CD4-positive, alpha-beta T cell (primary cell): ENCODE measurements at regions of chr5 and their contacts with region 1.

Region 1: DNA sequence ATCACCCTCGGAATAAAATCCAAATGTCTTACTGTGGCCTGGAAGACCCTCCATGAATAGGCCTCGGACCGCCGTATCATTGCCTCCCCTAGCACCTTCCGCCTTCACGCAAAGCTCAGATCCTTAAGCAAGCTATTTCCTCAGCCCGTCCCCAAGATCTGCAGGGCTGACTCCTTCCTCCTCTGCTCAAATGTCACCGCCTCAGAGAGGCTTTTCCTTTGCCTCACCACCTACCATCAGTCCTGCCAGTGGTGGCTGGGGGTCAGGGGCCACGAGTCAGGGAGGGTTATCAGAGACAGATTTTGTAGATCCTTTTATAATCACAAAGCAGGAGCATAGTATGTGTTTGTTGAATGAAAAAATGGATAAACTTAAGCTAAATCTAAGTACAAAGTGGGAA is 74.4 kb upstream of the KIF2A start:
- DNase-seq: no peak
- ATAC-seq: no peak
- H3K4me3 ChIP-seq: no peak overlapping the region
- H3K4me3 Mint-ChIP-seq: no peak overlapping the region
- H3K27ac ChIP-seq: no peak overlapping the region
- H3K27ac Mint-ChIP-seq: no peak overlapping the region
- H3K4me1 ChIP-seq: no peaks in the 10 kb centered on the region
- H3K4me1 Mint-ChIP-seq: no peaks in the 10 kb centered on the region
- H3K27me3 ChIP-seq: no peaks in the 10 kb centered on the region
- H3K27me3 Mint-ChIP-seq: peaks cover 7% of the 10 kb centered on the region
- CTCF ChIP-seq: no peak

Region 2: DNA sequence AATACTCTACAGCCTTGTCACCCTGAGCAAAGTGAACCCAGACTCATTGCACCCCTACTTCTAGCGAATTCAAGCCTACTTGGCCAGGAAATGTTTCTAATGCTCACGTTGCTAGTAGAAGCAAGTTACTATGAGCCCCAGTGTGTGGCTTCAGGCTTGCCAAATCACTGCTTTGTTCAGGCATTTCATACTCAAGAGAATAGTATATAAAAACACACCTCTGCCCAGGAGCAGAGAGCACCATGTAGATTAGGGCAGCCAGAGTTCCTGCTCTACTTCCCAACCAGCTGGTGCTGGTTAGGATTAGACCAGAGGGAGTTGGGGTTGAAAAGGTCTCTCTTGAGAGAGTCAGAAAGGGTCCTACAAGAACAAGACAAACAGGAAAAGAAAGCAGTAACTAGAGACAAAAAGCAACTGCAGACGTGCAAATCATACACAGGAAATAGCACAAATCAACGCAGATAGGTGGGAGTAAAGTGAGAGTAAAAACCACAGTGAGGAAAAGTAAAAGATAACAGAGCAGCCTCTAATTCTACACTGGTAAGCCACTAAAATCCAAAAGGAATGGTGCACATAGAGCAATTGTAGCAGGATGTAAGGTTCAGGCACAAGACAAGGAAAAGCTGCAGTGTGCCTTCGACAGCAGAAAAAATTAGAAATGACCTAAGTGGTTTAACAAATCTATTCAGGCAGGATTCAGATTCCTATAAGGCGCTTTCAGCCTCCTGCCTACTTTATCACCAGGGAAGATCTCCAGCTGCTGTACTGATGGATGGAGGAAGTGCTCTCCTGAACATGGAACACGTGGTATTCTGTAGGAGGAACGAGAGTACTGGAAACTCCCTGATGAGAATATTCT is 24.8 kb after region 1 on chr5:
- CTCF ChIA-PET with region 1: no interaction called
- POLR2A ChIA-PET with region 1: no interaction called
- intact Hi-C with region 1: loop called in 1 of 2 experiments (anchors 5 kb)
- DNase-seq: peak in 10 of 14 experiments; percentile 1 to 73 (median 14)
- ATAC-seq: peak; percentile 87
- H3K4me3 ChIP-seq: peak overlapping the region; percentile 34
- H3K4me3 Mint-ChIP-seq: peak overlapping the region; percentile 66
- H3K27ac ChIP-seq: peak overlapping the region; percentile 63 to 66
- H3K27ac Mint-ChIP-seq: peak overlapping the region; percentile 92
- H3K4me1 ChIP-seq: peaks cover 33% of the 10 kb centered on the region
- H3K4me1 Mint-ChIP-seq: peaks cover 86% of the 10 kb centered on the region
- H3K27me3 ChIP-seq: no peaks in the 10 kb centered on the region
- H3K27me3 Mint-ChIP-seq: no peaks in the 10 kb centered on the region
- CTCF ChIP-seq: no peak

Region 3: GRCh38 chr5:62284946-62285891 is 53.6 kb after region 1 on chr5:
- CTCF ChIA-PET with region 1: no interaction called
- POLR2A ChIA-PET with region 1: no interaction called
- intact Hi-C with region 1: loop called in 1 of 2 experiments (anchors 10 kb)
- DNase-seq: peak in 4 of 14 experiments; percentile 4 to 67 (median 36)
- ATAC-seq: peak; percentile 39
- H3K4me3 ChIP-seq: no peak overlapping the region
- H3K4me3 Mint-ChIP-seq: no peak overlapping the region
- H3K27ac ChIP-seq: no peak overlapping the region
- H3K27ac Mint-ChIP-seq: no peak overlapping the region
- H3K4me1 ChIP-seq: peaks cover 15% of the 10 kb centered on the region
- H3K4me1 Mint-ChIP-seq: peaks cover 59% of the 10 kb centered on the region
- H3K27me3 ChIP-seq: no peaks in the 10 kb centered on the region
- H3K27me3 Mint-ChIP-seq: no peaks in the 10 kb centered on the region
- CTCF ChIP-seq: no peak